Activated naive CD4-positive, alpha-beta T cell treated with anti-CD3 and anti-CD28 coated beads, Interleukin-2, amount 10 ng/mL, durations not matched to agents 7 days and 5 days (primary cell): ENCODE measurements at regions of chr19 and their contacts with region 1.

Region 1: DNA sequence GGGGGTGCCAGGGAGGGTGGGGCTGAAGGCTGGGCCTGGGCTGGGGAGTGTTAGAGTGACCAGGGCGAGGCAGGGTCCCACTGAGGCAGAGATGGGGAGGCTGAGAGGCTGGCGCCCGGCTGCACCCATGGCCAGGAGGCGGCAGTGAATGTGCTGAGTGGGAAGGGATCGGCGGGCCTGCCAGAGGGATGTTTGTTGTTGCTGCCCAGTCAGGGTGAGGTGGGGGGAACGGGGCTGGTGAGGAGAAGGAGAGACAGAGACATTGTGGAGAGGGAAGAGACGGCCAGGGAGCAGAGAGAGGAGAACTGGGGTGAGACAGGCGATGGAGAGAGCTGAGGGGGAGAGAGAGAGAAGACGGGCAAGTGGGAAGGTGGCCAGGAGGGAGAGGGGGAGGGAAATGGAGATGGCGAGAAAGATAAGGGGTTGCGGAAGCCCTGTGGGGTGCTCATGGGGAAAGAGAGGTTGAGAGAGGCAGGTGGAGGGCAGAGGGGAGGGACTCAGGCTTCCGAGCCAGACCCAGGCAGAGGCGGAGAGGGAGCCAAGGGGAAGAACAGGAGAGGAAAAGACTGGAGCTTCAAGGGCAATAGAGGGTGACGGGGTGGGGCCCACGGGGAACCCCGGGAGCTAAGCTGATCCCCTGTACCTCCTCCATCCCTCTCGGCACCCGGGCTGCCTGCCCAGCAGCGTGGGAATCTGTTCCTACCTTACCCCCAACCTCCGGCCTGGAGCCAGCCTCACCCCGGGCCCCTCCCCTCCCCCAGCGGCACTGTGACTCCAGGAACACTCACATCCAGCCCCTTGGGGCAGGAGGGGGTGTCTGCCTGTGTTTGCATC is 690 bp upstream of the B3GNT8 start:
- DNase-seq: peak; percentile 47
- H3K4me3 Mint-ChIP-seq: peak overlapping the region; percentile 81
- H3K27ac Mint-ChIP-seq: peak overlapping the region; percentile 78
- H3K4me1 Mint-ChIP-seq: peaks cover 30% of the 10 kb centered on the region
- H3K27me3 Mint-ChIP-seq: no peaks in the 10 kb centered on the region

Region 2: DNA sequence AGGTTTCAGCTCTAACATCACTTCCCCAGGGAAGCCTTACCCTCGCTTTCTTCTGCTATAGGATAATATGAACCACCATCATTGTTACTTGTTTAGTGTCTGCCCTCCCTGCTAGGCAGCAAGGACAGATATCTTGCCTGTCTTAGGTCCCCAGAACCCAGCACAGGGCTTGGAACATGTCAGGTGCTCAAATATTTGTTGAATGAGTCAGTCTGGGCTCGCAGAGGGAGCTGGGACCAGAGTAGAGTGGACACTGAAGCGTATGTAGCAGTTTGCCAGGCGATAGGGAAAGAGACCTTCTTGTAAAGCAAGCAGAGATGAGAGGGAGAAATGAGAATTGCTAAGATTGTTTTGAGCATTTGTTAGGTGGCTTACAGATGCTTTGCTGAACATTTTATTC is 18.6 kb before region 1 on chr19:
- CTCF ChIA-PET with region 1: no interaction called
- DNase-seq: no peak
- H3K4me3 Mint-ChIP-seq: no peak overlapping the region
- H3K27ac Mint-ChIP-seq: no peak overlapping the region
- H3K4me1 Mint-ChIP-seq: peaks cover 16% of the 10 kb centered on the region
- H3K27me3 Mint-ChIP-seq: no peaks in the 10 kb centered on the region

Region 3: DNA sequence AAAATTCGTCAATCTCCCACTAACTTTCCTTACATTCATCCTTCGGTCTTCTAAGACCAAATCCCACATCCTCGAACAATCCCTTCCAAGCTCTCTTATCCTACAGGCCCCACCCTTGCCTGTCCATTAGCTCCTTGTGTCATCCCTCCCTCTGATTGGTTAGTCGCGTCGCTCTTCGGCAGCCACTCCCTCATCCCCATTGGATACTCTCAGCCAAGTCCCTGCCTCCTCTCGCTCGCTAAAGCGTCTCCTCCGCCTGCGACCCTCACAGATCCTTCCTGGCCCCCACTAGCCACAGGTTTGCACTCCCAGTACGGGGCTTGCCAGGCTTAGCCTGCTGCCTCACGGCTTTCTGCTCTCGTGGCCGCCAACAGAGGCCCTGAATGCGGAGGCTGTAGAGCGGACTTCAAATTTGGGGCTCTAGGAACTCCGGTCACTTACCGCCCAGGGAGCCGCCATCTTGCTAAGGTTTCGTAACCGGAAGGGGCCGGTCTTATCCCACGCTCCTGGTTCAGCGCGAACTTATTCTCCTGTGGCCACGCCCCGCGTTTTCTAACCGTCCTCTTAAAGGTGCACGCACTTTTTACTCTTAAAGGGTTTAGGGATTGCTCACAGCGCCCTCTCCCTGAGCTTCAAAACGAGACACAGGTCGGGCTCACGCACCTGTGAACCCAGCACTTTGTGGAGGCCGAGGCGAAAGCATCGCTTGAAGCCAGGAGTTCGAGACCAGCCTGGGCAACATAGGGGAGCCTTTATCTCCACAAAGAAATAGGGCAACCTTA is 11.8 kb after region 1 on chr19 and contains the start of gene DMAC2:
- CTCF ChIA-PET with region 1: interaction called, 10 read pairs
- DNase-seq: peak; percentile 99
- H3K4me3 Mint-ChIP-seq: no peak within 1 kb of the TSS
- H3K27ac Mint-ChIP-seq: no peak within 1 kb of the TSS
- H3K4me1 Mint-ChIP-seq: peaks cover 30% of the 10 kb centered on the region
- H3K27me3 Mint-ChIP-seq: peaks cover 14% of the 10 kb centered on the region